Activated CD4-positive, alpha-beta T cell treated with anti-CD3 and anti-CD28 coated beads for 36 hours (primary cell): ENCODE measurements at regions of chr11 and their contacts with region 1.

Region 1: DNA sequence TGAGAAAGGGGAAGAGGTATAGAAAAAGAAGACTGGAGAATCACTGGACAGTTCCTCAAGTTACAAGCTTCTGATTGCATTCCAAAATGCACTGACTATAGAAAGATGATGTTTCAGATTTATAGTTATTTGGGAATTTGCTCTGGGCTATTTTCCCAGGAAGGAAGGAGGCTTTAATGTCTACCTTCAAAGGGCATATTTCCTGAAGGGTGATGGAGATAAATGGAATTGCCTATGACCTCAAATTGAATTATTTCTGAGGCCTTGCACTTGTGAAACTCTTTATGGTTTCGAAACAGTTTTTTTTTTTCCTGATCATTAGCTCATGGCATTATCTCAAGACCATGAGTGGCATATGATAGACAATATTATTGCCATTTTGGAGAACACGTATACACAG is 333.9 kb downstream of the METTL15 start:
- DNase-seq: no peak
- ATAC-seq: no peak
- H3K4me3 Mint-ChIP-seq: no peak overlapping the region
- H3K27ac Mint-ChIP-seq: no peak overlapping the region
- H3K4me1 Mint-ChIP-seq: no peaks in the 10 kb centered on the region
- H3K27me3 Mint-ChIP-seq: no peaks in the 10 kb centered on the region

Region 2: DNA sequence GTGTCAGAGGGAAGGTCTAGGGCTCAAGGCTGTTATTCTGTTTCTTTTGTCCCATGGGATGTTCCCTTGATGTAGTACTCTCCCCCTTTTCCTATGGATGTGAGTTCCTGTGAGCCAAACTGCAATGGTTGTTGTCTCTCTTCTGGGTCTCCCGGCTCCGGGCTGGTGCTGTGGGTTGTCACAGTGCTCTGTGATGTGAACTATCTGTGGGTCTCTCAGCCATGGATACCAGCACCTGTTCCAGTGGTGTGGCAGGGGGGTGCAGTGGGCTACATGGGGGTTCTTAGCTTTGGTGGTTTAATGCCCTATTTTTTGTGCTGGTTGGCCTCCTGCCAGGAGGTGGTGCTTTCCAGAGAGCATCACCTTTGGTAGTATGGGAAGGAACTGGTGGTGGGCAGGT is 633.6 kb after region 1 on chr11:
- CTCF ChIA-PET with region 1: no interaction called
- POLR2A ChIA-PET with region 1: no interaction called
- intact Hi-C with region 1: loop called in 1 of 2 experiments (anchors 5 kb)
- DNase-seq: no peak
- ATAC-seq: no peak
- H3K4me3 Mint-ChIP-seq: no peak overlapping the region
- H3K27ac Mint-ChIP-seq: no peak overlapping the region
- H3K4me1 Mint-ChIP-seq: no peaks in the 10 kb centered on the region
- H3K27me3 Mint-ChIP-seq: no peaks in the 10 kb centered on the region